Cardiac septum (tissue), 1 donor: ENCODE measurements at regions of chr22 and their contacts with region 1.

Region 1: GRCh38 chr22:17368554-17369438 is 464 bp upstream of the CECR2 start:
- DNase-seq: no peak

Region 2: DNA sequence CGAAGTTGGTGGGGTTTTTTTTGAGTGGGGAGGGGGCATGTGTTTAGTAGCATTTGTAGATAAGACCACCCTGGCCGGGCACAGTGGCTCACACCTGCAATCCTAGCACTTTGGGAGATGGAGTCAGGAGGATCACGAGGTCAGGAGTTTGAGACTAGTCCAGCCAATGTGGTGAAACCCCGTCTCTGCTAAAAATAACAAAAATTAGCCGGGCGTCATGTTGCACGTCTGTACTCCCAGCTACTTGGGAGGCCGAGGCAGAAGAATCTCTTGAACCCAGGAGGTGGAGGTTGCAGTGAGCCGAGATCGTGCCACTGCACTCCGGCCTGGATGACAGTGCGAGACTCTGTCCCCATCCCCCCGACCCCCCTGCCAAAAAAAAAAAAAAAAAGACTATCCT is 35.1 kb after region 1 on chr22:
- intact Hi-C with region 1: loop called (anchors 2 kb)
- DNase-seq: no peak

Region 3: DNA sequence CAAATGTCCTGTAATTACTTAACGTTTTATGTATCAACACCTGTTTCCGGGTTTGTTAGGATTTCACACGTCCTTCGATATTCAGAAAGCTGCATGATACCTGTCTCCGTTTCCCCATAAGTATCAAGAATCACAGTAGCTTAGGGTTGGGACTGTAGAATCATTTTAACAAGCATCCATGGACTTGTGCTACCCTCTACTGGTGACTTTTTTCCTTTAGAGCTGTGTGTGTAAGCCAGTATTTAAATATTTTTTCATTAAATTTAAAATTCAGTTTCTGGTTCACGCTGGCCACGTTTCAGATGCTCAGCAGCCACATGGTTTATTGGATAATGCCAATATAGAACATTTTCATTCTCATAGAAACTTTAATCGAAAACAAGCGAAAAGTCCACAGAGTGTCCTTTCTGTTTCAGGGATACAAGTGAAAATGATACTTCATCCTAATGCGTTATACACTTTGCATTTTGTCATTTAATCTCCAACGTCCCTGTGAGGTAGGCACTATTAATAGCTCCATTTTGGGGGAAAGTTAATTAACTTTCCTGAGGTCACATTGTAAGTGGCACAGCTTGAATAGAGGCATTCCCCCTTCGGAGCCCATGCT is 133.0 kb after region 1 on chr22:
- intact Hi-C with region 1: loop called (anchors 5 kb)
- DNase-seq: no peak